ENCODE measurements at regions of chr12 and their contacts with region 1.

Region 1: GRCh38 chr12:53093777-53094393 is 3.6 kb upstream of the IGFBP6 start:
- DNase-seq: no peak
- ATAC-seq: no peak
- H3K4me3 ChIP-seq: no peak overlapping the region
- H3K4me3 Mint-ChIP-seq: no peak overlapping the region
- H3K27ac ChIP-seq: no peak overlapping the region
- H3K27ac Mint-ChIP-seq: no peak overlapping the region
- H3K4me1 ChIP-seq: peaks cover 3 to 21% of the 10 kb centered on the region in 2 experiments
- H3K4me1 Mint-ChIP-seq: peaks cover 18 to 19% (median 18%) of the 10 kb centered on the region in 3 donors
- H3K27me3 ChIP-seq: peaks cover 0 to 22% of the 10 kb centered on the region in 2 experiments
- H3K27me3 Mint-ChIP-seq: peaks cover 0 to 10% of the 10 kb centered on the region in 2 donors

Region 2: GRCh38 chr12:52903285-52903854 is 190.5 kb before region 1 on chr12:
- CTCF ChIA-PET with region 1: no interaction called
- POLR2A ChIA-PET with region 1: no interaction called
- DNase-seq: peak; percentile 18 to 67 (median 41)
- ATAC-seq: peak; percentile 73 to 98 (median 78)
- H3K4me3 ChIP-seq: peak overlapping the region; percentile 39 to 64
- H3K4me3 Mint-ChIP-seq: peak overlapping the region; percentile 43 to 71 (median 43)
- H3K27ac ChIP-seq: no peak overlapping the region
- H3K27ac Mint-ChIP-seq: no peak overlapping the region
- H3K4me1 ChIP-seq: peaks cover 0 to 10% of the 10 kb centered on the region in 2 experiments
- H3K4me1 Mint-ChIP-seq: peaks cover 7 to 9% (median 7%) of the 10 kb centered on the region in 3 donors
- H3K27me3 ChIP-seq: peaks cover 0 to 36% of the 10 kb centered on the region in 2 experiments
- H3K27me3 Mint-ChIP-seq: peaks cover 0 to 5% of the 10 kb centered on the region in 2 donors

Region 3: GRCh38 chr12:53079226-53080117 is 14.4 kb before region 1 on chr12 and contains the start of gene SPRYD3:
- CTCF ChIA-PET with region 1: interaction called in 1 of 2 experiments, 32 read pairs
- POLR2A ChIA-PET with region 1: interaction called in 1 of 2 experiments, 18 read pairs
- DNase-seq: peak; percentile 90 to 99 (median 95)
- ATAC-seq: peak; percentile 96 to 98 (median 96)
- H3K4me3 ChIP-seq: peak within 1 kb of the TSS; percentile 74 to 90
- H3K4me3 Mint-ChIP-seq: peak within 1 kb of the TSS; percentile 89 to 90 (median 90)
- H3K27ac ChIP-seq: peak within 1 kb of the TSS; percentile 75
- H3K27ac Mint-ChIP-seq: peak within 1 kb of the TSS; percentile 91 to 97
- H3K4me1 ChIP-seq: peaks cover 5 to 36% of the 10 kb centered on the region in 2 experiments
- H3K4me1 Mint-ChIP-seq: peaks cover 46 to 57% (median 47%) of the 10 kb centered on the region in 3 donors
- H3K27me3 ChIP-seq: peaks cover 0 to 7% of the 10 kb centered on the region in 2 experiments
- H3K27me3 Mint-ChIP-seq: no peaks in the 10 kb centered on the region
- total RNA-seq, gene SPRYD3: 29.3 to 65.0 (median 58.2) TPM

Region 4: DNA sequence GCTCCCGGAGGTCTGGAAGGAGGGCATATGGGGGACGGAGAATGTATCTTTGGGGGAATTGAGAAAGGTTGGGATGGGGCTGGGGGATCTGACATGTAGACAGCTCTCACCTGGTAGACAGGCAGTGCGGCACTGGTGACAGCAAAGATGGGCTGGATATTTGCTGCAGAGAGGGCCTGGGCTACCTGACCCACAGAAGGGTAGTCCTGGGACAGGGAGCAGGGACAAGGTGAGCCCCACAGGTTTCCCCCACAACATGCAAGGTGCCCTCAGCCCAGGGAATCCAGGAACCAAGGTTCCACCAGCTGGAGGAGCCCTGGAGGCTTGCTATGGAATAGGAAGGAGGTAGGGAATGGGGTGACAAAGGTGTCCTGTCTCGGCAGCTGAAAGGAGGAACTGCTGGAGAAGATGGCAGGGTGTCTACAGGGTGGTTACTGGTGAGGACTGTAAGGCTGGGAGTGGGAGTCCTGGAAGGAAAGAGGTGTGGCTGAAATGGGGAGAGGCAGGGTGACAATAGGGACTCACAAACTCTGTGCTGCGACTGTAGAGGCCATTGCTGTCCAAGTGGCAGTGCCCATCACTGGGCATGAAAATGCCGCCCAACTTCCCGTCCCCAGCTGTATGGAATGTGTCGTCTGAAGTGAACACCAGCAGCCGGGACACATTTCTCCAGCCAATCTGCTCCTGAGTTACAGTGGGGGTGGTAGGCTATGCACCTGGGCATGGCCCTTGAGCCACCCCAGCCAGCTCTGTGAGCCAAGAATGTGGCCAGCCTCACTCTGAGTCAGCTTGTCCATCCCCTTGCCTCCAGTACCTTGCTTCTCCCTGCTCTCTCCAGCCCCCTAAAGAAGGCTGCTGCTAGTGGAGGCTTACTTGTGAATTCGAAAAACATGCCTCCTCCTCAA is 101.9 kb after region 1 on chr12:
- CTCF ChIA-PET with region 1: no interaction called
- POLR2A ChIA-PET with region 1: no interaction called
- DNase-seq: no peak
- ATAC-seq: no peak
- H3K4me3 ChIP-seq: no peak overlapping the region
- H3K4me3 Mint-ChIP-seq: peak overlapping the region in 1 of 3 donors; percentile 51
- H3K27ac ChIP-seq: peak overlapping the region; percentile 21
- H3K27ac Mint-ChIP-seq: peak overlapping the region; percentile 52 to 83
- H3K4me1 ChIP-seq: peaks cover 19 to 51% of the 10 kb centered on the region in 2 experiments
- H3K4me1 Mint-ChIP-seq: peaks cover 53 to 68% (median 61%) of the 10 kb centered on the region in 3 donors
- H3K27me3 ChIP-seq: no peaks in the 10 kb centered on the region
- H3K27me3 Mint-ChIP-seq: no peaks in the 10 kb centered on the region

Measured in T-cell (primary cell).